Heart left ventricle (tissue), 16 donors: ENCODE measurements at regions of chr19 and their contacts with region 1.

Region 1: DNA sequence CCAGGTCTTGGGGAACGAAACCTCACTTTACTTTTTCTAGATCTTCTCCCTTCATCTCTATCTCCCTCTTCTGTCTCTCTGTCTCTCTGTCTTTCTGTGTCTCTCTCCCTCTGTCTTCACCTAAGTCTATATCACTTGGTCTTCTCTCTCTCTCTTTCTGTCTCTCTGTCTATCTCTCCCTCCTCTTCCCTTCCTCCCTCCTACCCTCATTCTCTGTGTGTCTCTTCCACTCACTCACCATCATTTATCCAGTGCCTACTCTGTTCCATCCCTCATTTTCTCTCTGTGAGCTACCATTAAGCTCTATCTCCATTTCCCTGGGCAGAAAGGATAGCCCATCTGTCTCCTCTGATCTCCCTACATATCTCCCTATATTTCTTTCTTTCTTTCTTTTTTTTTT is 32.2 kb upstream of the FBL start:
- DNase-seq: no peak
- ATAC-seq: no peak
- H3K4me3 ChIP-seq: no peak overlapping the region
- H3K27ac ChIP-seq: no peak overlapping the region
- H3K4me1 ChIP-seq: no peaks in the 10 kb centered on the region
- H3K27me3 ChIP-seq: peaks cover 0 to 16% (median 2%) of the 10 kb centered on the region in 9 donors
- CTCF ChIP-seq: no peak
- POLR2A ChIP-seq: no peak

Region 2: GRCh38 chr19:38944981-38945506 is 933.4 kb before region 1 on chr19:
- intact Hi-C with region 1: no loop called
- DNase-seq: no peak
- ATAC-seq: no peak
- H3K4me3 ChIP-seq: no peak overlapping the region
- H3K27ac ChIP-seq: no peak overlapping the region
- H3K4me1 ChIP-seq: peaks cover under 1 to 8% (median 4%) of the 10 kb centered on the region in 12 donors
- H3K27me3 ChIP-seq: peaks cover 0 to 5% (median 0%) of the 10 kb centered on the region in 9 donors
- CTCF ChIP-seq: no peak
- POLR2A ChIP-seq: no peak

Region 3: DNA sequence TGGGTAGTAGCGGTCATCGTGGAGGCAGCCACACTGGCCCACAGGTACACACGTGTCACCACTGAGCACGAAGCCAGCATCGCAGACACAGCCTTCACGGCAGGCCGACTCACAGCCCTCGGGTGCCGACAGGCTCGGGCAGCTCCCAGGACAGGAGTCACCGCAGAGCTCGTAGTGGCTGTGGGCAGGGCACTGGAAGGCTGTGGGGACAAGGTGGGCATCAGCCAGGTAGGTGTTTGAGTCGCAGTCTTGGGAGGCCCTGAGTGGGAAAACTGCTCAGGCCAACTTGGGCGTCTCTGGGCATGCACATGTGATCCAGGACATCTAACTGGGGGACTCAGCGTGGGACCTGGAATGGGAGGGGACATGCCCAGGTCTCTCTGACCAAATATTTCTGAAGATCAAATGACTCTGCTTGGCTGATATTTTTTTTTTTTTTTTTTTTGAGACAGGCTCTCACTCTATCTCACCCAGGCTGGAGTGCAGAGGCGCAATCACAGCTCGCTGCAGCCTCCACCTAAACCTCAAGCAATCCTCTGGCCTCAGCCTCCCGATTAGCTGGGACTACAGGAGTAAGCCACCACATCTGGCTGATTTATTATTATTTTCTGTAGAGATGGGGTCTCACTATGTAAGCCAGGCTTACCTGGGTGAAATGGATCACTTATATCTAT is 11.6 kb after region 1 on chr19:
- intact Hi-C with region 1: loop called in 1 of 10 experiments (anchors 2 kb)
- DNase-seq: no peak
- ATAC-seq: no peak
- H3K4me3 ChIP-seq: no peak overlapping the region
- H3K27ac ChIP-seq: no peak overlapping the region
- H3K4me1 ChIP-seq: peaks cover 0 to 5% (median 0%) of the 10 kb centered on the region in 12 donors
- H3K27me3 ChIP-seq: peaks cover 3 to 24% (median 17%) of the 10 kb centered on the region in 9 donors
- CTCF ChIP-seq: no peak
- POLR2A ChIP-seq: no peak